ENCODE measurements at regions of chr6 and their contacts with region 1.

Region 1: GRCh38 chr6:152863618-152864326 is 113.2 kb downstream of the VIP start:
- DNase-seq: peak in 6 of 10 donors; percentile 43 to 80 (median 60)
- H3K4me3 ChIP-seq: no peak overlapping the region
- H3K27ac ChIP-seq: no peak overlapping the region
- H3K27me3 ChIP-seq: peaks cover 0 to 12% (median 0%) of the 10 kb centered on the region in 45 donors
- CTCF ChIP-seq: peak; percentile 61 to 92 (median 80)

Region 2: GRCh38 chr6:152897799-152898399 is 34.1 kb after region 1 on chr6:
- intact Hi-C with region 1: no loop called
- DNase-seq: peak in 7 of 10 donors; percentile 14 to 64 (median 58)
- H3K4me3 ChIP-seq: no peak overlapping the region
- H3K27ac ChIP-seq: no peak overlapping the region
- H3K27me3 ChIP-seq: peaks cover 0 to 27% (median 0%) of the 10 kb centered on the region in 45 donors
- CTCF ChIP-seq: peak; percentile 25 to 86 (median 72)

Region 3: GRCh38 chr6:153023977-153024708 is 160.4 kb after region 1 on chr6:
- intact Hi-C with region 1: loop called (anchors 5 to 10 kb)
- DNase-seq: peak in 2 of 10 donors; percentile 4 to 35
- H3K4me3 ChIP-seq: no peak overlapping the region
- H3K27ac ChIP-seq: no peak overlapping the region
- H3K27me3 ChIP-seq: no peaks in the 10 kb centered on the region
- CTCF ChIP-seq: peak; percentile 57 to 91 (median 80)

Measured in dorsolateral prefrontal cortex (tissue), 120 donors.